Activated T-helper 1 cell treated with anti-CD3 and anti-CD28 coated beads, Interleukin-12 subunit alpha, Interleukin-12 subunit beta, Interleukin-2, Interleukin-4 antibody, amounts not matched to agents 30 ng/mL and 10 ng/mL and 1 ng/mL, durations not matched to agents 14 hours and 24 hours and 36 hours (primary cell): ENCODE measurements at regions of chr17 and their contacts with region 1.

Region 1: GRCh38 chr17:16380640-16381495 is at the start of gene UBB:
- DNase-seq: peak; percentile 94
- H3K4me3 Mint-ChIP-seq: peak within 1 kb of the TSS; percentile 90
- H3K27ac Mint-ChIP-seq: peak within 1 kb of the TSS; percentile 92
- H3K4me1 Mint-ChIP-seq: peaks cover 29% of the 10 kb centered on the region
- H3K27me3 Mint-ChIP-seq: peaks cover 1% of the 10 kb centered on the region
- total RNA-seq, gene UBB: 1,933 and 1,974 TPM in 2 replicates

Region 2: DNA sequence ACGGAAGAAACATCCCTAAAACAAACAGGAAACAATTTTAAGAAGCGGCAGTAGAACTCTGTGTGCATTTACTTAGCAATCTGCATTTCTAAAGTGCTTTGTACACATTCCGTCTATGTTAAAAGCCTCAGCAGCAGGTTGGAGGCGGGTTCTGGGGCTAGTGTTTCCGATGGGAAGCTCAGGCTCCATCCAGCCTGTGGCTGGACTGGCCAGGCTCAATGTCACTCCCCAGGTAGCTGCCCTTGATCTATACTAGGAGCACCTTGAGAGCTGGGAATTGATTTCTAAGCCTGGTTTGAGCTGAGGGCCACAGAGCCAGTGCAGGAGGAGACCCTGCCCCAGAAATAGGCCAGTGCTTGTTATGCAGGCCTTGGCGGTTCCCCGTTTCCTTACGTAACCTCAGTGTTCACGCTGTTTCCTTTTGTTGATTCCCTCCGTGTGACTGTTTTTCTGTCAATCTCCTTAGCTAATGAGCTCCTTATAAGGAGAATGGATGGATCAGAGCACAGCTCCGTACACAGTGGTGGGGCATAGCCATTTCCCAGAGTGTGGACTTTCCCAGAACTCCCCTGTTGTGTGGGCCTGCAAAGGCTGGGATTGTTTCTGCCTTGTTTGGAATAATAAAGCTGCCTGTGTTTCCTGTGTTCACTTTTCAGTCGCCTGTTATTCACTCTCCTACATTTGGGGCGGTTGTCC is 414.5 kb before region 1 on chr17:
- intact Hi-C with region 1: no loop called
- DNase-seq: no peak
- H3K4me3 Mint-ChIP-seq: no peak overlapping the region
- H3K27ac Mint-ChIP-seq: no peak overlapping the region
- H3K4me1 Mint-ChIP-seq: no peaks in the 10 kb centered on the region
- H3K27me3 Mint-ChIP-seq: peaks cover 42% of the 10 kb centered on the region

Region 3: DNA sequence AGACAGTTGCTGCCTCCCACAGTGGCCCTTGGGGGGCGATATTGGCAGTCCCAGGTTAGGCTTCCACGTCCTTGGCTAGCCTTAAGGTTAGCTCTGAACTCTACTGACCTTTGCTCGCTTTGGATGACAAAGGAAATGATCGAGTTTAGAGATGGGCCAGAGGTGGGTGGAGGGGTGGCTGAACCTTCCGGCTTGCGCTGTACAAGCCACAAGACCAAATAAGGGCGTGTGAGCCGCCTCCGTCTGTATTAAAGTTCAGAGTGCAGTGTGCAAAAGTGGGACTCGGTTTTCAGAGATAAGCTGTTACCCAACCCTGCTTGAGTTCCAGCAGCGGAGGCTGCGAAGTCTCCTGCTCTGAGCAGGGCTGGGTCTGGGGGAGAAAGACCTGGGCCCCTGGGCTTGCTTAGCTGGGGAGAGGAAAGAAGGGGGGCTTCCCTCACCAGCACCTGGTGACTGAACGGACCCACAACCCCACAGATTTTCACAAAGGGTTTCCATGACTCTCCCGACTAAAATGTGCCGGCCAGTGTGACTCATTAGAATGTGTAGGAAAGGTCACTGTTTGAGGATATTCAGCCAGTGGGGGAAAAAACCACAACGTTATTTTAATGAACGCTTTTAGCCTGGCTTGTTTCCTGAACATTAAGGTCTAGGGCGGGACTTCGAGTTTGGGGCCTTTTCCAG is 94.8 kb before region 1 on chr17:
- intact Hi-C with region 1: loop called (anchors 1 kb)
- DNase-seq: peak; percentile 75
- H3K4me3 Mint-ChIP-seq: peak overlapping the region; percentile 73
- H3K27ac Mint-ChIP-seq: peak overlapping the region; percentile 99
- H3K4me1 Mint-ChIP-seq: peaks cover 48% of the 10 kb centered on the region
- H3K27me3 Mint-ChIP-seq: no peaks in the 10 kb centered on the region

Region 4: DNA sequence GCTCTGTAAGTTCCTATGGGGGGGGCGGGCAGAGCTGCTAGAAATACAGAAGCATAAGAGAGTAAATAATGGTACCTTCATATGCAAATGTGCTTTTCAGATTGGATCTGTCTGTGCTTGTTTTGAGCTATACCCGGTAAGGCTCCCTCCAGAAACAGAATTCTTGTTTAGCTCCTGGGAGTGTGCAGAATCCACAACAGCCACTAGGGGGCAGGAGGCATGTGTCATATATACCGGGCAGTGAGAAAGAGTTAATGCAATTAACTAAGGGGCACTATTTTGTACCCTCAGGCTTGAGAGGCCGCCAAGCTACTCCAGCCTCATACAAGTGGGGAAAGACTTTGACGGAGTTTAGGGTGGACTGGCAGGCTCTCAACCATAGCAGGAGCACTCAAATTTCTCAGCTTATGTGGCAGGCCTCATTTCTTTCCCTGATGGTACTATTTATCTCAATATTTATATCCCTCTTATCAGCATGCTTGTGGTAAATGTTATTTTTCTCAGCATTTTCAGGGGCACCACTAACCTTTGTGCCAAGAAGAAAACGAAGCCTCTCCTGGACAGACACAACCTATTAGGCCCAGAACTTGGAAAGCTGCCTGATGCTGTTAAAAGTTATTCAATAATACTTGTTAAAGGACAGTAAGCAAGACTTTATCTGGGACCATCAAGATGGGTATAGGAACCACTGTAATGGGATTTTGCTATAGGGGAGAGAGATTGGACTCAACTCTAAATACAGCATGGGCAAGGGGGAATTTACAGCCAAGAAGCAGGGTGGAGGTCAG is 16.9 kb before region 1 on chr17:
- intact Hi-C with region 1: loop called (anchors 1 kb)
- DNase-seq: peak; percentile 59
- H3K4me3 Mint-ChIP-seq: no peak overlapping the region
- H3K27ac Mint-ChIP-seq: no peak overlapping the region
- H3K4me1 Mint-ChIP-seq: no peaks in the 10 kb centered on the region
- H3K27me3 Mint-ChIP-seq: peaks cover 3% of the 10 kb centered on the region

Region 5: DNA sequence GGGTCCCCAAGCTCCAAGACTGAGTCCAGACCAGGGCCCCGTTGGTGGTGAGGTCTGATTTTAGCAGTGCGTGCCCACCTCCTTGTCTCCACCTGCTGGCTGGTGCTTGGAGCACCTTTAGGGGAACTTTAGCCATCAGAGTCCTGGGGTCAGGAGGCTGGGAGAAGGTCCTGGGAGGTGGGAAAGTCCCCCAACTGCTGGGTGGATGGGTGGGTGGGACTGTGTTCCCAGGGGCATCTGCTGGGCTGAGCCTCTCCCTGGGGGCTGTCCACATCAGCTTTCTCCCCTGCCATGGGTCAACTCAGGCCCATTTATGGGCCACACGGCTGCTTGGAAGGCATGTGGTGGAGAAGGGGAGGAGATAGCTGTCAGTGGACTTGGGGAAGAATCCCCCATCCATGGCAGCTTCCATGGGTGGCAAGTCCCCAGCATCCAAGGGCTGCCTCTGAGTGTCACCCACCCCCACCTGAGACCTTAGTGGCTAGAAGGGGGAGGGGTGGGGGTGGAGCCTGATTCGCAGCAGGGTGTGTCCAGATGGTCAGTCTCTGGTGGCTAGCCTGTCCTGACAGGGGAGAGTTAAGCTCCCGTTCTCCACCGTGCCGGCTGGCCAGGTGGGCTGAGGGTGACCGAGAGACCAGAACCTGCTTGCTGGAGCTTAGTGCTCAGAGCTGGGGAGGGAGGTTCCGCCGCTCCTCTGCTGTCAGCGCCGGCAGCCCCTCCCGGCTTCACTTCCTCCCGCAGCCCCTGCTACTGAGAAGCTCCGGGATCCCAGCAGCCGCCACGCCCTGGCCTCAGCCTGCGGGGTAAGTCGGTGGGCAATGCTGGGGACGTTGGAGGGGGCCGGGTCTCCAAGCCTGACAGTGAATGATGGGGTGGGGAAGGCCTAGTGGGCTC is 34.4 kb after region 1 on chr17 and contains the start of gene TRPV2:
- intact Hi-C with region 1: loop called (anchors 1 kb)
- DNase-seq: peak; percentile 37
- H3K4me3 Mint-ChIP-seq: peak within 1 kb of the TSS; percentile 96
- H3K27ac Mint-ChIP-seq: peak within 1 kb of the TSS; percentile 99
- H3K4me1 Mint-ChIP-seq: peaks cover 43% of the 10 kb centered on the region
- H3K27me3 Mint-ChIP-seq: no peaks in the 10 kb centered on the region
- total RNA-seq, gene TRPV2: 38.2 and 42.2 TPM in 2 replicates

Region 6: GRCh38 chr17:16521070-16521727 is 140.3 kb after region 1 on chr17:
- intact Hi-C with region 1: loop called (anchors 1 kb)
- DNase-seq: peak; percentile 45
- H3K4me3 Mint-ChIP-seq: no peak overlapping the region
- H3K27ac Mint-ChIP-seq: no peak overlapping the region
- H3K4me1 Mint-ChIP-seq: peaks cover 12% of the 10 kb centered on the region
- H3K27me3 Mint-ChIP-seq: peaks cover 29% of the 10 kb centered on the region

Region 7: DNA sequence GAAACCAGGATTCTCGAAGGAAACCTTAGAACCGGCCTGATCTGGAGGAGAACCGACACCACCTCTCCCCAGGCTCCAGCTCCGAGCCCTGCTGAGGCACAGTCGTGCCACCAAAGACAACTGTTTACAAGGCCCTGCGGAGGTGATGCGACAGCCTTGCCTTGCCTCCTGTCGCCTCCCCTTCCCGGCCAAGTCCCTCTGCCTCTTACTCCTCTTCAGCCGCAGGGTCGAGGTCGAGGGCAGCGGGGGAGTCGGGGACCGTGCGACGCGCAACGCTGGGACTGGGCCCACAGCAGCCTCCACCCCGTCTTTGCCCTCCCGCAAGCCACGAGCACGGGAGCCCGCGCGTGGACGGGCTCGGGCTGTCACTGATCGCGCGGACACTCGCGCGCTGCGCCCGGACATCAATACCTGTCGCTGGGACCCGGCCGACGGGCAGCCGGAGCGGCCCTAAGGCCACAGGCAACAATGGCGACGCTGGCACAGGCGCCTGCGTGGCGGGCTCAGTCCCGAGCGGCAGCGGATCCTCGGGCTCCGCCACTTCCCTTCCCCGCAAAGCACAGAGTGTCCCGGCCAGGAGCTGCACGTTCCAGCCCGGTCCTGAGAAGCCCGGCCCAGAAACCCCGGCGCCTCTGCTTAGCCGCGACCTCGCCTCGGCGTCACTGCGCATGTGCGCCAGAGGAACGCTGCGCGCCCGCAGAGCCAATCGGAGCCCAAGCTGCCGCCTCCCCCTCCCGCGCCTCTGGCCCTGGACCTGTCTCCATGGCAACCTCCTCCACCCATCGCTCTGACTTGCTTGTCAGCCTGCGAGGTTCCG is 187.9 kb after region 1 on chr17 and contains the start of gene ZNF287:
- intact Hi-C with region 1: loop called (anchors 1 kb)
- DNase-seq: peak; percentile 90
- H3K4me3 Mint-ChIP-seq: peak within 1 kb of the TSS; percentile 86
- H3K27ac Mint-ChIP-seq: peak within 1 kb of the TSS; percentile 62
- H3K4me1 Mint-ChIP-seq: peaks cover 11% of the 10 kb centered on the region
- H3K27me3 Mint-ChIP-seq: peaks cover 4% of the 10 kb centered on the region
- total RNA-seq, gene ZNF287: 4.8 and 7.1 TPM in 2 replicates